ENCODE measurements at regions of chr15 and their contacts with region 1.

Region 1: GRCh38 chr15:41957021-41957897 is 15.1 kb downstream of the EHD4 start:
- DNase-seq: no peak
- H3K4me3 Mint-ChIP-seq: peak overlapping the region; percentile 26
- H3K27ac Mint-ChIP-seq: peak overlapping the region; percentile 63
- H3K4me1 Mint-ChIP-seq: peaks cover 52% of the 10 kb centered on the region
- H3K27me3 Mint-ChIP-seq: no peaks in the 10 kb centered on the region

Region 2: GRCh38 chr15:41936649-41937567 is 20.4 kb before region 1 on chr15:
- intact Hi-C with region 1: loop called (anchors 2 kb)
- DNase-seq: peak; percentile 78
- H3K4me3 Mint-ChIP-seq: peak overlapping the region; percentile 73
- H3K27ac Mint-ChIP-seq: peak overlapping the region; percentile 100
- H3K4me1 Mint-ChIP-seq: peaks cover 78% of the 10 kb centered on the region
- H3K27me3 Mint-ChIP-seq: no peaks in the 10 kb centered on the region

Region 3: DNA sequence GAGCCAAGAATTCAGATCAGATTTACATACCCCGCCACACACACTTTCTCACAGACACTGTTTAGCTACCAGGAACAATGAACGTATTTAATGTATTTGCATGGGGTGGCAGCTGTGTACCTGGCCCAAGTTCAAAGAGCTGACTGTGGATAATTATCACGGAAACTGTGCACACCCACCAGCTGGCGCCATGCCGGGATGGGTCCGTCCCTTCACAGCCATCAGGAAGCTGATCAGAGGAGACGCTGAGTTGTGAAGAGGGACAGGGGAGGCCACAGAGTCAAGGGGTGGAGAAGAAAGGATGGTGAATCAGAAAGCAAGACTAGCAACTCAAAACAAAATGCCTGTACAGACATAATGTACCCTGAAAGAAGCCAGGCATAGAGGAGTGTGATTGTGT is 150.2 kb after region 1 on chr15:
- intact Hi-C with region 1: no loop called
- DNase-seq: no peak
- H3K4me3 Mint-ChIP-seq: peak overlapping the region; percentile 8
- H3K27ac Mint-ChIP-seq: no peak overlapping the region
- H3K4me1 Mint-ChIP-seq: peaks cover 23% of the 10 kb centered on the region
- H3K27me3 Mint-ChIP-seq: peaks cover 2% of the 10 kb centered on the region

Region 4: GRCh38 chr15:42324308-42324707 is 367.0 kb after region 1 on chr15:
- intact Hi-C with region 1: no loop called
- DNase-seq: no peak
- H3K4me3 Mint-ChIP-seq: no peak overlapping the region
- H3K27ac Mint-ChIP-seq: no peak overlapping the region
- H3K4me1 Mint-ChIP-seq: no peaks in the 10 kb centered on the region
- H3K27me3 Mint-ChIP-seq: no peaks in the 10 kb centered on the region

Measured in activated T-helper 1 cell treated with anti-CD3 and anti-CD28 coated beads, Interleukin-12 subunit alpha, Interleukin-12 subunit beta, Interleukin-2, Interleukin-4 antibody, amounts not matched to agents 30 ng/mL and 10 ng/mL and 1 ng/mL, durations not matched to agents 14 hours and 24 hours and 36 hours (primary cell).